CD4-positive, alpha-beta T cell (primary cell): ENCODE measurements at regions of chr15 and their contacts with region 1.

Region 1: DNA sequence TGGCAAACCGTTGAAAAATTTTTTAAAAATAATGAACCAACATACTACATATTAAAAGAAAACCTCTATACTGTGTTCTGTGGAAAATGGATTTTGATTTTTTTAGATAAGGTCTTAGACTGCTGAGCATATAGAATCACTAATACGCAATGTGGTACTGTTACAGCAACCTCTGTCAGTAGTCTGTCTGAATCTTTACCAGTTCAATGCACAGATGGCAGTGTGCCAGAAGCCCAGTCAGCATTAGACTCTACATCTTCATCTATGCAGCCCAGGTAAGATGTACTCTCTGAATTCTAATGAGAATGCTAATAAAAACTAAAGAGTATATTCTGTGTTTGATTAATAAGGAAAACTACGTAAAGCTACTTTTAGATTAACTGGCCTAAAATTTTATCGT is 31.3 kb upstream of the FAH start:
- DNase-seq: no peak
- ATAC-seq: no peak
- H3K4me3 ChIP-seq: no peak overlapping the region
- H3K4me3 Mint-ChIP-seq: no peak overlapping the region
- H3K27ac ChIP-seq: no peak overlapping the region
- H3K27ac Mint-ChIP-seq: no peak overlapping the region
- H3K4me1 ChIP-seq: no peaks in the 10 kb centered on the region
- H3K4me1 Mint-ChIP-seq: peaks cover 14% of the 10 kb centered on the region
- H3K27me3 ChIP-seq: no peaks in the 10 kb centered on the region
- H3K27me3 Mint-ChIP-seq: no peaks in the 10 kb centered on the region
- CTCF ChIP-seq: no peak

Region 2: DNA sequence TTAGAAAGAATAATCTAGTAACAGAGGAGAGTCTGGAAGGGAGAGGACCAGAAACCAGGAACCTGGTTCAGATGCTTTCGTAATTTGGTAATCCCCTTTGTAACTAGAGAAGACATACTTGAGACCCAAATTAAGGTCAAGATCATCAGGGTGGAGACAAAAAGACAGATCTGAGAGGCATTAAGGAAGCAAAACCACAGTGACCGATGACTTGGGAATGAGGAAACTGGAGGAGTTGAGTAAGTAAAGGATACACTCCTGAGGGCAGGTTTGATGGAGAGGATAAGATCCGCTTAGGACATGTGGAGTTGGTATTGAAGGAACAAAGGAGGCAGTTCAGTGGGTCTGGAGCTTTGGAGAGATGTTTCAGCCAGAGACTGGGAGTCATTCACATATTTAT is 126.9 kb before region 1 on chr15:
- CTCF ChIA-PET with region 1: no interaction called
- POLR2A ChIA-PET with region 1: no interaction called
- intact Hi-C with region 1: no loop called
- DNase-seq: no peak
- ATAC-seq: no peak
- H3K4me3 ChIP-seq: no peak overlapping the region
- H3K4me3 Mint-ChIP-seq: no peak overlapping the region
- H3K27ac ChIP-seq: no peak overlapping the region
- H3K27ac Mint-ChIP-seq: no peak overlapping the region
- H3K4me1 ChIP-seq: peaks cover 4% of the 10 kb centered on the region
- H3K4me1 Mint-ChIP-seq: peaks cover 4% of the 10 kb centered on the region
- H3K27me3 ChIP-seq: no peaks in the 10 kb centered on the region
- H3K27me3 Mint-ChIP-seq: no peaks in the 10 kb centered on the region
- CTCF ChIP-seq: no peak

Region 3: GRCh38 chr15:80072285-80072994 is 49.1 kb before region 1 on chr15:
- CTCF ChIA-PET with region 1: no interaction called
- POLR2A ChIA-PET with region 1: no interaction called
- intact Hi-C with region 1: loop called in 1 of 2 experiments (anchors 10 kb)
- DNase-seq: peak in 5 of 14 experiments; percentile 10 to 80 (median 69)
- ATAC-seq: peak; percentile 99
- H3K4me3 ChIP-seq: peak overlapping the region; percentile 31
- H3K4me3 Mint-ChIP-seq: peak overlapping the region; percentile 81
- H3K27ac ChIP-seq: no peak overlapping the region
- H3K27ac Mint-ChIP-seq: peak overlapping the region; percentile 55
- H3K4me1 ChIP-seq: no peaks in the 10 kb centered on the region
- H3K4me1 Mint-ChIP-seq: peaks cover 86% of the 10 kb centered on the region
- H3K27me3 ChIP-seq: no peaks in the 10 kb centered on the region
- H3K27me3 Mint-ChIP-seq: no peaks in the 10 kb centered on the region
- CTCF ChIP-seq: no peak